ENCODE measurements at regions of chr5 and their contacts with region 1.

Region 1: GRCh38 chr5:141762790-141763368 is 80.8 kb upstream of the ARAP3 start:
- DNase-seq: peak in 1 of 2 donors; percentile 49
- ATAC-seq: peak; percentile 46 to 82 (median 68)
- H3K4me3 ChIP-seq: no peak overlapping the region
- H3K27ac ChIP-seq: peak overlapping the region in 2 of 10 donors; percentile 26 to 72
- H3K4me1 ChIP-seq: peaks cover 2 to 33% (median 15%) of the 10 kb centered on the region in 9 donors
- H3K27me3 ChIP-seq: peaks cover 0 to 33% (median 17%) of the 10 kb centered on the region in 7 donors
- CTCF ChIP-seq: peak in 5 of 9 donors; percentile 32 to 50 (median 42)

Region 2: GRCh38 chr5:141657937-141658545 is 104.8 kb before region 1 on chr5:
- intact Hi-C with region 1: no loop called
- DNase-seq: no peak
- ATAC-seq: no peak
- H3K4me3 ChIP-seq: no peak overlapping the region
- H3K27ac ChIP-seq: no peak overlapping the region
- H3K4me1 ChIP-seq: no peaks in the 10 kb centered on the region
- H3K27me3 ChIP-seq: no peaks in the 10 kb centered on the region
- CTCF ChIP-seq: no peak

Region 3: GRCh38 chr5:141805874-141806595 is 43.2 kb after region 1 on chr5:
- intact Hi-C with region 1: loop called in 1 of 10 experiments (anchors 5 kb)
- DNase-seq: peak; percentile 29 to 74
- ATAC-seq: peak; percentile 75 to 93 (median 91)
- H3K4me3 ChIP-seq: no peak overlapping the region
- H3K27ac ChIP-seq: peak overlapping the region; percentile 59 to 93 (median 81)
- H3K4me1 ChIP-seq: peaks cover 16 to 67% (median 48%) of the 10 kb centered on the region in 9 donors
- H3K27me3 ChIP-seq: peaks cover 0 to 56% (median 18%) of the 10 kb centered on the region in 7 donors
- CTCF ChIP-seq: peak in 1 of 9 donors; percentile 31

Region 4: GRCh38 chr5:141843162-141843927 is 80.5 kb after region 1 on chr5:
- intact Hi-C with region 1: loop called in 1 of 10 experiments (anchors 5 kb)
- DNase-seq: no peak
- ATAC-seq: peak in 3 of 8 donors; percentile 6 to 17 (median 13)
- H3K4me3 ChIP-seq: no peak overlapping the region
- H3K27ac ChIP-seq: peak overlapping the region in 9 of 10 donors; percentile 55 to 84 (median 67)
- H3K4me1 ChIP-seq: peaks cover 14 to 86% (median 62%) of the 10 kb centered on the region in 9 donors
- H3K27me3 ChIP-seq: peaks cover 0 to 11% (median 0%) of the 10 kb centered on the region in 7 donors
- CTCF ChIP-seq: no peak

Measured in heart right ventricle (tissue), 16 donors.